Sciatic nerve (tissue), 2 donors: ENCODE measurements at regions of chr18 and their contacts with region 1.

Region 1: GRCh38 chr18:50293039-50293438 is 5.5 kb upstream of the CXXC1 start:
- DNase-seq: no peak
- ATAC-seq: no peak

Region 2: DNA sequence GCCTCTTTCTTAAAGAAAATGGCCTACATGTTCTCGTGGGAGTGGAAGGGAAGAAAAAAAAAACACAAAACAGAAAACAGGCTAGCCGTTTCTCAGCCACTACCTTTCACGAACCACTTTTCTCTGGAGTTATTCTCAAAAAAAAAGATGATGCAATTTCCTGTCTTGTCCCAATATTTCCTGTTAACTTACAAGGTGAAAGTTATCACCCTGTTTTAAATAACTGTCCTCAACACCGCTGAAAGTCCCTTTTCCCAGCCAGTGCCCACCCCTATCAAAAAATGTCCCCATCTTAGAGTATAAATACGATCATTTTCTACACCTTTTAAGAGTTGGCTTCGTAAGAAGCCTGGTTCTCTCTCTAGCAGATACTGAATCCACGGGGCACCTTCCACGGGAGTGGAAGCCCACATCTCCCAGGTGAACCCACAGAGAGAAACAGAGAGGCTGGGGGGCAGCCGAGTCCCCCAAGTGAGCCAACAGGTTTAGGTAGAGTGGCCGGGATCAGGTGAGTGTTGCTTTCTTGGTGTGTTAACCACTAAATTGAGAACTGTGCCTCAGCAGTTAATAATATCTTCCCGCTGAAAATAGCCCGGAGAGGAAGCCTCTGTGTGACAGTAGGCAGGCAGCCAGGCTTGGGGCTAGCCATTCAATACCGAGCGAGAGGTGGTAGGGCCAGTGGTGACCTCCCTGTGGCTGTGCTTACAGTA is 1358.2 kb before region 1 on chr18:
- intact Hi-C with region 1: no loop called
- DNase-seq: no peak
- ATAC-seq: peak; percentile 14

Region 3: GRCh38 chr18:50218432-50219197 is 74.4 kb before region 1 on chr18:
- intact Hi-C with region 1: no loop called
- DNase-seq: no peak
- ATAC-seq: no peak

Region 4: GRCh38 chr18:50334546-50335152 is 41.6 kb after region 1 on chr18:
- intact Hi-C with region 1: no loop called
- DNase-seq: no peak
- ATAC-seq: no peak

Region 5: GRCh38 chr18:50644810-50645209 is 351.8 kb after region 1 on chr18:
- intact Hi-C with region 1: loop called (anchors 5 kb)
- DNase-seq: no peak
- ATAC-seq: no peak

Region 6: DNA sequence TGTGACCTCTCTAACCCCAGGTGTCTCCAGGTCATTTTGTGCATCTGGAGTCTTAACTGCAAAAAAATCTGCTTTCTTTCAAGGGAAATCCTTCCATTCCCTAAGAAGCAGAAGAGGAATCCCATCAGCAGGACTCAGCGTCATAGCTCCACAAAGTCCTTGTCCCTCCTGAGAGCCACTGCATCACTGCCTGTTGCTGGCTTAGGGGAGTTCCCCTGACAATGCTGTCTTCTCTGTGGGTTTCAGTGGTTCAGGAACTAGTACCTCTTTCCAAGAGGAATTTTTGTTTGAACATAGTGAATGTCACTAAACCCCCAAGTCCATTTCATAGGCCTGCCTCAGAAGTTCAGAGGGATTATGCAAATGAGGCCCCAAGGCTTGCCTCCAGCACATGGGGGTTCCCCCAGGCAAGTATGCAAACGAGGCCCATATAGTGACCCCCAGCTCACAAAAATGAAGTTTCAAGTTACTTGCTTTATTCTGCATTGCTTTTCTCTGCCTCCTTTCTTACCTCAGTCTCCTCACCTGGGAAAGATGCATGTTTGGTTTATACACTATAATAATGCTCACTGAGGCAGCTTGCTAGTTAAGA is 1418.4 kb after region 1 on chr18:
- intact Hi-C with region 1: no loop called
- DNase-seq: no peak
- ATAC-seq: no peak